Activated CD4-positive, alpha-beta memory T cell treated with anti-CD3 and anti-CD28 coated beads, Interleukin-2, amount 10 ng/mL, durations not matched to agents 7 days and 5 days (primary cell): ENCODE measurements at regions of chr7 and their contacts with region 1.

Region 1: DNA sequence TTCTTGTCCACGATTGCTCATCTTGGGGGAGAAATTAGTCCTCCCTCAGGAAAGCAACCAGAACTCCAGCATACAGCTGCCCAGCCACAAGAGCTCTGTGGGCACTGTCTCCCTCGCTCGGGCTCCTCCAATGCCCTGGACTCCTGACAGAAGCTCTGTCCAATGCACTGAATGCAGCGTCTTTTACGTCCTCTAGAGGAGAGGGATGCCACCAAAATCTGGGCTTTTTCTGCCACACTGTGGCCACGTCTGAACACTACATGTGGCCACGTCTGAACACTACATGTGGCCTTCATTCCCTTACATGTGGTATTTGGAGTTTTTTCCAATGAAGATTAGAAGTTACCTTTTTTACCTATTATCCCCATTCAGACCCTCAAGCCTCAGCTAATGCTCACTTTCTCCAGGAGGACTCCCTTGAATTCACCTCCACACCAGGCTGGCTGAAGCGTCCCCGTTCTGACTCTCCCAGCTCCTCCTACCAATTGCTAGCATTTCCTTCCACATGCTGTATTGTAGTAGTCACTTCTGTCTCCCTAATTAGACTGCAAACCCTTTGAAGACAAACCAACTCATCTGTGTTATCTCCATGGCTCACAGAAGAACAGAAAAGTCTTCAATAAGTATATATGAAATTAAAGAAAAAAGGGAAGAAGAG is 134.3 kb upstream of the PDE1C start:
- DNase-seq: no peak
- H3K4me3 Mint-ChIP-seq: no peak overlapping the region
- H3K27ac Mint-ChIP-seq: no peak overlapping the region
- H3K4me1 Mint-ChIP-seq: no peaks in the 10 kb centered on the region
- H3K27me3 Mint-ChIP-seq: no peaks in the 10 kb centered on the region

Region 2: GRCh38 chr7:32259931-32260596 is 55.6 kb after region 1 on chr7:
- CTCF ChIA-PET with region 1: no interaction called
- POLR2A ChIA-PET with region 1: no interaction called
- DNase-seq: no peak
- H3K4me3 Mint-ChIP-seq: no peak overlapping the region
- H3K27ac Mint-ChIP-seq: no peak overlapping the region
- H3K4me1 Mint-ChIP-seq: no peaks in the 10 kb centered on the region
- H3K27me3 Mint-ChIP-seq: no peaks in the 10 kb centered on the region

Region 3: DNA sequence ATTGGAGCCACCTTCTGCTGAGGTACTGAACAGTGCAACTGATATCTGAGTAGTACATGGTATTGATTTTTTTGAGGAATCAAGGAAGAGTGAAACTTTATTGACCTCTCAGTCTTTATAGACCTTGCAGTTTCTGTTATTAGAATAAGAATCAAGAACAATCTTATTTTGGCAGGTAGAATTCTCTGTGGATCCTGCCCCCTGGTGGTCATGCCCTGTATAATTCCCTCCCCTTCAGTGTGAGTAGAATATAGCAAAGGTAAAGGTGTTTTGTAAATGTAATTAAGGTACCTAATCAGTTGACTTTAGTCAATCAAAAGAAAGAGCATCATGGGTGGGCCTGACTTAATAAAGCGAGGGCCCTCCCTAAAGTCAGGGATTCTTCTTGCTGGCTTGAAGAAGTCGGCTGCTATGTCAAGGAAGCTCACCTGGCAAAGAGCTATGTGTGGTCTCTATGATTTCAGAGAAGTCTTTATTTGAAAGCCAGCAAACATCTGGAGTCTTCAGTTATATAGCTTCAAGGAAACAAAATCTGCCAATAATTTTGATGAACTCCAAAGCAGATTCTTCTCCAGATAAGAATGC is 142.8 kb after region 1 on chr7:
- CTCF ChIA-PET with region 1: interaction called, 21 read pairs
- POLR2A ChIA-PET with region 1: no interaction called
- DNase-seq: peak; percentile 28
- H3K4me3 Mint-ChIP-seq: no peak overlapping the region
- H3K27ac Mint-ChIP-seq: no peak overlapping the region
- H3K4me1 Mint-ChIP-seq: no peaks in the 10 kb centered on the region
- H3K27me3 Mint-ChIP-seq: no peaks in the 10 kb centered on the region

Region 4: DNA sequence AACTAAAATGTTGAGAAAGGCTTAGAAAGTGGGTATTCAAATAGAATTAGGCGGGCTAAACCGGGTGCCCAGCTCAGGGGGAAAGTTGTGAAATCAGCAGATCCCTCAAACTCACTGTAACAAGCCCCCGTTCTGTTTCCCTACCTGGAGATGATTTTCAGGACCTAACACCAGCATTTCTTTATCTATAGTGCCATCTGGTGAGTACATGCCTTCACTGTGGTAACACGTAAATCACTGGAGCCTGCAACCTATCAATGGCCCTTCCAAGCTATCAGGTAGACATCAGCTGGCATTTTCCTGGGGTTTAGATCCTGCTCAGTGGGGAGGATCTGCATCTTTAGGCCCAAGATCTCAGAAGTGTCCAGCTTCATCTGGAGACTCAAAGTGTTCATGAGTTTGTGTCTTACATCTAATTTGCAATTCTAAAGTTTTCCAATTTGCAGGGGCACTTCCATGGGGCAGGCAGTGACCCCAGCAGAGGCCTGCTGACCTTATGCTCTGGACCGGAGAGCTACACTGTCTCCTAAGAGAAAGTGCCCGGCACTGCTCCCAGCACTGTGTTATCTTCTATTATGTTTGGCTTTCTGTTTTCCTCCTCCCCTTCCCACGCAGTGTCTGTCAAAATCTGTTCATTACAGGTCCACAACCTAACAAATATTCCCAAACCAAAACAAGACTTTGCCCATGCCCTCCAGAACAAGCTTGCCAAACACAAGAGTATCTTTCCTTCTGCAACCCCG is 153.2 kb after region 1 on chr7:
- CTCF ChIA-PET with region 1: no interaction called
- POLR2A ChIA-PET with region 1: no interaction called
- DNase-seq: no peak
- H3K4me3 Mint-ChIP-seq: no peak overlapping the region
- H3K27ac Mint-ChIP-seq: no peak overlapping the region
- H3K4me1 Mint-ChIP-seq: no peaks in the 10 kb centered on the region
- H3K27me3 Mint-ChIP-seq: no peaks in the 10 kb centered on the region

Region 5: DNA sequence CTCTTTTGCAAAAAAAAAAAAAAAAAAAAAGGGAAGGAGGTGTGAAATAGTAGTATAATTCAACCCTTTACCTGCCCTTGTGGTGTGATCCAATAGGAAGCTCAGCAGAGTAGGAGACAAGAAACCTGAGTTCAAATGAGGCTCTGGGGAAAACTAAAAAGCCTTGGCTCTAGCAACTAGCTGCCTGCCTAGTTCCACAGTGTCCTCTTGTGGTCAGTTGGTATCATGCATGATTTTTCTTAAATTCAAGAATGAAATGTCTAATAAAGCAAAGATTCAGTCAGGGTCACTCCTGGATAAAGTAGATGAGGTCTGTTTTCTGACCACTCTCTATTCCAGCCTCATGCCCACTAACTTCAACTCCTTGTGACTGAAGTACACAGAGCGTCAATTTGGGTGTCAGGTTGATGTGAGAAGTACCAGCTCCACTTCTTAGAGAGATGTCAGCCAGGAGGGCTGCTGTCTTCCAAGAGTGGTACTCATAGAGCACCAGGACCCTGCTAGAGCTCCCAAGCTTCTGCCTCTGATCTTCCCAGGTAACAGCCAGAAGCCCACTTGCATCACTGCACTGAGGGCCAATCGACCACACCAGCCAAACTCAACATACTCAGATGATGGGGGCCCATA is 275.2 kb after region 1 on chr7:
- CTCF ChIA-PET with region 1: interaction called, 17 read pairs
- POLR2A ChIA-PET with region 1: no interaction called
- DNase-seq: no peak
- H3K4me3 Mint-ChIP-seq: no peak overlapping the region
- H3K27ac Mint-ChIP-seq: no peak overlapping the region
- H3K4me1 Mint-ChIP-seq: no peaks in the 10 kb centered on the region
- H3K27me3 Mint-ChIP-seq: no peaks in the 10 kb centered on the region